ENCODE measurements at regions of chr4 and their contacts with region 1.

Region 1: DNA sequence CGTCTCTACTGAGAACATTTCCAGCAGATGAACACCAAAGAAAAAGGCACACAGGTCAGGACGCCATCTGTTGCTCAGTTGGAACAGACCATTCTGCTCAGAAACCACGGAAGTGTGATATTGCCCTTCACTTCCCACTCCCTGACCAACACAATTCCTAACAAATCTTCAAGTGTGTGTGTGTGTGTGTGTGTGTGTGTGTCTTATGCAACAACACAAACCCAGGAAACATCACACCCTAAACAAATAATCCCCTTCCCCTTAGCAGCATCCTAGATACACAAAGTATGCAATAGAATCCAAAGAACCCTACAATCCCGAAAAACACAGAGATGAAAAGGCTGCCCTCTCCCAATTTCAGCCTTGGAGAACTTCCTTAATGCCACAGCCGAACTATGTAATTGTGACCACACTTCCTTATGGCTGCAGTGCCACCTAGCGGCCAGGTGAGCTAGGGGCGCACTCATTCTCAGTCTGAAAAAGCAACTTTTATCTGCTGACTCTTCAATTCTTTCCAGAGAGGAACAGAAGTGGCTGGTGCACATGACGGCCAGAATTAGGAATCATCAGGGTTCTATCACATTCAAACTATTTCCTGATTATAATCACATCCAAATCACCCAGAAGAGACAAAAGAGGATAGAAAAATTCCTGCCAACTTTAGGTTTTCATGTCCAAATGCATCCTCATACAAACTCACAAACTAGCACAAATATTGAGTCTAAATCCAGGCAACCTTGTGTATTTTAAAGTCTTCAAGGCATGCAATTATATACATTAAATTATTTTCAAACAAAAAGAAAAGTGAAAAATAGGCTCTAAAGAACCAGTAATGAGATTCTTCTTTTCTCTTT is 164.9 kb downstream of the DHX15 start:
- DNase-seq: peak; percentile 77
- H3K4me3 ChIP-seq: no peak overlapping the region
- H3K27ac ChIP-seq: no peak overlapping the region
- H3K4me1 ChIP-seq: no peaks in the 10 kb centered on the region
- H3K27me3 ChIP-seq: no peaks in the 10 kb centered on the region; the same call in 1 of the 2 replicates

Region 2: GRCh38 chr4:23135792-23136645 is 1283.4 kb before region 1 on chr4:
- in situ Hi-C with region 1: loop called (anchors 25 kb)
- DNase-seq: peak; percentile 25
- H3K4me3 ChIP-seq: no peak overlapping the region
- H3K27ac ChIP-seq: no peak overlapping the region
- H3K4me1 ChIP-seq: no peaks in the 10 kb centered on the region
- H3K27me3 ChIP-seq: no peaks in the 10 kb centered on the region

Region 3: GRCh38 chr4:23422878-23423277 is 996.5 kb before region 1 on chr4:
- in situ Hi-C with region 1: no loop called
- DNase-seq: no peak
- H3K4me3 ChIP-seq: no peak overlapping the region
- H3K27ac ChIP-seq: no peak overlapping the region
- H3K4me1 ChIP-seq: no peaks in the 10 kb centered on the region
- H3K27me3 ChIP-seq: no peaks in the 10 kb centered on the region

Region 4: GRCh38 chr4:23866450-23867075 is 552.8 kb before region 1 on chr4:
- in situ Hi-C with region 1: loop called (anchors 10 kb)
- DNase-seq: no peak
- H3K4me3 ChIP-seq: no peak overlapping the region
- H3K27ac ChIP-seq: no peak overlapping the region
- H3K4me1 ChIP-seq: no peaks in the 10 kb centered on the region
- H3K27me3 ChIP-seq: no peaks in the 10 kb centered on the region

Measured in GM23248 (cell line).